Activated CD4-positive, alpha-beta T cell treated with anti-CD3 and anti-CD28 coated beads, Interleukin-2, amount 10 ng/mL, durations not matched to agents 7 days and 5 days (primary cell): ENCODE measurements at regions of chr10 and their contacts with region 1.

Region 1: DNA sequence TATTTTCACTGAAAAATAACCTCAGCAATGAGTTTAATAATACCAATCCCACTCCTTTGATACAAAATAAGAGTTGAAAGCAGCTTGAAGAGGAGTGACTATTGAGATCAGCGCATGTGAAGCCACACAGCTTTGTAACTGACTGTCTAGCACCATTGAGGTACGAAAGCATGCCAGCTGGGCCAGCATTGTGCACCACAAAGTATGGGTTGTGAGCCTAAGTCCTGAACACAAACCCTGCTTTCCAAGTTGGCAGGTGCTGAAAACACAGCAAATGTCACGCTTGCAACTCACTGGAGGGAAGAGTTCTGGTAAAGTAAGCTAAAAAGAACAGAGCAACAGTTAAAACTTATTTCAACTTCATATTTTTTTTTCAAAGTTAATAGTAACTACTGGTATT is 4.0 kb upstream of the FAM53B start:
- DNase-seq: no peak
- H3K4me3 Mint-ChIP-seq: no peak overlapping the region
- H3K27ac Mint-ChIP-seq: no peak overlapping the region
- H3K4me1 Mint-ChIP-seq: peaks cover 30% of the 10 kb centered on the region
- H3K27me3 Mint-ChIP-seq: no peaks in the 10 kb centered on the region

Region 2: GRCh38 chr10:122974023-122974422 is 1774.1 kb before region 1 on chr10:
- CTCF ChIA-PET with region 1: no interaction called
- POLR2A ChIA-PET with region 1: no interaction called
- DNase-seq: no peak
- H3K4me3 Mint-ChIP-seq: no peak overlapping the region
- H3K27ac Mint-ChIP-seq: no peak overlapping the region
- H3K4me1 Mint-ChIP-seq: no peaks in the 10 kb centered on the region
- H3K27me3 Mint-ChIP-seq: peaks cover 10% of the 10 kb centered on the region

Region 3: GRCh38 chr10:124530215-124530665 is 217.9 kb before region 1 on chr10:
- CTCF ChIA-PET with region 1: interaction called, 12 read pairs
- POLR2A ChIA-PET with region 1: no interaction called
- DNase-seq: peak; percentile 88
- H3K4me3 Mint-ChIP-seq: no peak overlapping the region
- H3K27ac Mint-ChIP-seq: no peak overlapping the region
- H3K4me1 Mint-ChIP-seq: peaks cover 4% of the 10 kb centered on the region
- H3K27me3 Mint-ChIP-seq: no peaks in the 10 kb centered on the region